ENCODE measurements at regions of chr12 and their contacts with region 1.

Region 1: DNA sequence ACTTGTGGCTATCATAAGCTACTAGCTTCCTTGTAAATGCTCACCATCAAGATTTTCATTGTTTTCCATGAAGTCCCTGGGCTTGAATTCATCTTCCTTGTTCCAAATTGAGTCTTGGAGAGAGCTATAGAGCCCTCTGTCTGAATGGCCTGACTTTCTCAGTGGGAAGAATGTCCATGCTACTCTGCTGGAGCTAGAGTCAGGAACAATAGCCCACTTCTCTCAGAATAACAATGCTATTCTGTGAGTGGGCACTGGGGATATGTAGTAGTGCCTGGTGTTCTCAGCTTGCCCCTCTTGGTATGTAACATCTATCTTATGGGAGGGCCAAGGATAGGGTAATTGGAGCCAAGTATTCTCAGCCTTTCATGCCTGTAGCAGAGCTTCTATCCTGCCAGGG is 127.6 kb upstream of the TRHDE start:
- DNase-seq: no peak
- CTCF ChIP-seq: no peak

Region 2: GRCh38 chr12:72133497-72134055 is 11.0 kb before region 1 on chr12:
- CTCF ChIA-PET with region 1: interaction called, 11 read pairs
- POLR2A ChIA-PET with region 1: no interaction called
- DNase-seq: no peak
- CTCF ChIP-seq: no peak